GM12878 (cell line): ENCODE measurements at regions of chr12 and their contacts with region 1.

Region 1: GRCh38 chr12:51177897-51178296 is 5.0 kb upstream of the TFCP2 start:
- DNase-seq: no peak
- ATAC-seq: no peak
- H3K4me3 ChIP-seq: no peak overlapping the region
- H3K27ac ChIP-seq: no peak overlapping the region
- H3K4me1 ChIP-seq: no peaks in the 10 kb centered on the region; the same call in 1 of the 2 replicates
- H3K27me3 ChIP-seq: no peaks in the 10 kb centered on the region
- CTCF ChIP-seq: no peak
- EP300 ChIP-seq: no peak
- POLR2A ChIP-seq: no peak
- RAD21 ChIP-seq: no peak

Region 2: DNA sequence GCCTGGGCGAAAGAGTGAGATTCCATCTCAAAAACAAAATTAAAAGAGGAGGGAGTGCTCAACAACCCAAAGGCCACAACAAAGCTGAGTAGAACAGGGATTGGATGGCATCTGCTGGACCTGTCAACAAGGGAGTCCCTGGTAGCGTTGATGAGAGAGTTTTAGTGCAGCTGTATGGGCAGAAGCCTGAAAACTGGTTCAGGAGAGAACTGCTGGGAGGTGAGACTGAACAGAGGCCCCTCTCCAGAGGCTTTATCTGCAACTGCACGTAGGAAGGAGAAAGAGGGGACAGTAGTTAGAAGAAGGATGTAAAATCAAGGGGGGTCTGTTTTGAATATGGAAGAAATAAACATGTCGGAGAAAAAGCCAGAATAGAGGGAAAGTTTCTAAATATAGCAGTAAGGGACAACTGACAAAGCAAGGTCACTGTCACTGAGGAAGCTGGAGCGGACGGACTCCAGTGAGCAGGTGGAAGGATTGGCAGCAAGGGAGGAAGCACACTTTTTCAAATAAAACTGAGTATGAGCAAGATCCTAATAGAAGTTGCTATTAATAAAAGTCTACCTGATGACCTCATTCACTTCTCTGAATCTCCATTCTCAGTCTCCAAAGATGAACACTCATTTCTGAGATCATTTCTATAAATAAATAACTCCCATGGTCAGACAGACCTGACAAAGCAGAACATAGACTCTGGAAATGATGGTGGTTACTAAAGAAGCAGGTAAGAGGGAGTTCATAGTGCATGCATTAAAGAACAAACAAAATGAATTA is 425.8 kb before region 1 on chr12:
- CTCF ChIA-PET with region 1: no interaction called
- POLR2A ChIA-PET with region 1: no interaction called
- RAD21 ChIA-PET with region 1: no interaction called
- SMC1A ChIA-PET with region 1: no interaction called
- in situ Hi-C with region 1: no loop called
- intact Hi-C with region 1: no loop called
- DNase-seq: no peak
- ATAC-seq: peak; percentile 58
- H3K4me3 ChIP-seq: no peak overlapping the region
- H3K27ac ChIP-seq: no peak overlapping the region
- H3K4me1 ChIP-seq: no peaks in the 10 kb centered on the region
- H3K27me3 ChIP-seq: no peaks in the 10 kb centered on the region
- CTCF ChIP-seq: no peak
- EP300 ChIP-seq: no peak
- POLR2A ChIP-seq: no peak
- RAD21 ChIP-seq: no peak

Region 3: DNA sequence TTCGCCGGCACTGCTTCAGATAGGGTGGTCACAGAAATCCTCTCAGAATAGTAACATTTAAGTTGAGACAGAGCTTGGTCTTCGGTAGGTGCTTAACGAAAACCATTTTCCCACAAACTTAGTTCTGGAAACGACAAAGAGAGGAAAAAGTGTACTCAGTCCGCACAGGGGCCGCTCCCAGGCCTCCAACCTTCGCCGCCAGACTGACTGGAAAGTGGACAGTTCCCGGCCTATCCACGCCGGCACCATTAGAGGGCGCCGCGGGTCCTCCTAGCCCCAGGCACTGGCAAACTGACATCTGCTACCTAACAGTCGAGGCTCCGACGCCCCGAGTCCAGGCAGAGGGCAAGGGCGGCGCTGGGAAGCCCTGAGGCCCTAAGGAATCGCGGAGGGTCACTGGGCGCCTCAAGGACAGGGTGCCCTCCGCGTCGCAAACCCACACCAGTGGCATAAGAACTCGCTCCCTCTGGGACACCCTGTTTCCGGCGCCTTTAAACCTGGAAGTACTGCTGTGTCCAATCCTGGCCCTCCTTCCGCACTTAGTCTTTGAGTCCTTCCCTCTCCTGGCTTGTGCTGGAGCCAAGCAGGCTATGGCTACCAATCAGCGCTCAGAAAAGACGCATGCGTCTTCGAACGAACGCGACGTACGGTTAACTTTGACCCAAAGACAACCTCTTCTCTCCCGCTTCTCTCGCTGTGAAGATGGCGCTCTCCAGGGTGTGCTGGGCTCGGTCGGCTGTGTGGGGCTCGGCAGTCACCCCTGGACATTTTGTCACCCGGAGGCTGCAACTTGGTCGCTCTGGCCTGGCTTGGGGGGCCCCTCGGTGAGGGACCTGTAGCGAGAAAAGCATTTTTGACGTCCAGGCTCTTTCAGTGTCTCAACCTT is 130.0 kb before region 1 on chr12 and contains the start of gene LETMD1:
- CTCF ChIA-PET with region 1: no interaction called
- POLR2A ChIA-PET with region 1: no interaction called
- RAD21 ChIA-PET with region 1: no interaction called
- SMC1A ChIA-PET with region 1: no interaction called
- in situ Hi-C with region 1: no loop called
- intact Hi-C with region 1: no loop called
- DNase-seq: peak; percentile 98
- ATAC-seq: peak; percentile 98
- H3K4me3 ChIP-seq: peak within 1 kb of the TSS; percentile 94
- H3K27ac ChIP-seq: peak within 1 kb of the TSS; percentile 96
- H3K4me1 ChIP-seq: peaks cover 6% of the 10 kb centered on the region
- H3K27me3 ChIP-seq: no peaks in the 10 kb centered on the region
- CTCF ChIP-seq: peak; percentile 92 to 97 (median 94)
- EP300 ChIP-seq: no peak
- POLR2A ChIP-seq: peak; percentile 95
- RAD21 ChIP-seq: peak; percentile 82
- polyA plus RNA-seq, gene LETMD1: 36.5 to 37.1 TPM

Region 4: GRCh38 chr12:51188359-51189051 is 10.6 kb after region 1 on chr12:
- CTCF ChIA-PET with region 1: interaction called, 5 read pairs
- POLR2A ChIA-PET with region 1: interaction called, 3 read pairs
- RAD21 ChIA-PET with region 1: interaction called, 5 read pairs
- SMC1A ChIA-PET with region 1: interaction called, 11 read pairs
- in situ Hi-C with region 1: no loop called
- intact Hi-C with region 1: no loop called
- DNase-seq: peak; percentile 60
- ATAC-seq: peak; percentile 86
- H3K4me3 ChIP-seq: 0 out of 2 replicates have a peak overlapping the region, but pooled peaks have one; percentile 17
- H3K27ac ChIP-seq: peak overlapping the region; percentile 70
- H3K4me1 ChIP-seq: peaks cover 31% of the 10 kb centered on the region
- H3K27me3 ChIP-seq: no peaks in the 10 kb centered on the region
- CTCF ChIP-seq: no peak
- EP300 ChIP-seq: peak; percentile 32 to 43; a peak in 1 of 4 replicates
- POLR2A ChIP-seq: no peak
- RAD21 ChIP-seq: no peak

Region 5: GRCh38 chr12:51341259-51342007 is 163.5 kb after region 1 on chr12:
- CTCF ChIA-PET with region 1: no interaction called
- POLR2A ChIA-PET with region 1: no interaction called
- RAD21 ChIA-PET with region 1: no interaction called
- SMC1A ChIA-PET with region 1: no interaction called
- in situ Hi-C with region 1: no loop called
- intact Hi-C with region 1: no loop called
- DNase-seq: peak; percentile 65
- ATAC-seq: peak; percentile 89
- H3K4me3 ChIP-seq: no peak overlapping the region
- H3K27ac ChIP-seq: no peak overlapping the region
- H3K4me1 ChIP-seq: peaks cover 20% of the 10 kb centered on the region
- H3K27me3 ChIP-seq: no peaks in the 10 kb centered on the region
- CTCF ChIP-seq: peak; percentile 99 to 100 (median 99); a peak in 5 of 6 replicates
- EP300 ChIP-seq: no peak
- POLR2A ChIP-seq: no peak
- RAD21 ChIP-seq: peak; percentile 98